ENCODE measurements at regions of chr20 and their contacts with region 1.

Region 1: GRCh38 chr20:47438577-47439381 is 62.9 kb upstream of the NCOA3 start:
- DNase-seq: peak; percentile 87
- ATAC-seq: peak; percentile 70
- H3K4me3 ChIP-seq: peak overlapping the region in 1 of 5 experiments; percentile 11
- H3K4me3 Mint-ChIP-seq: peak overlapping the region; percentile 61
- H3K27ac ChIP-seq: peak overlapping the region; percentile 87 to 88
- H3K27ac Mint-ChIP-seq: peak overlapping the region; percentile 90
- H3K4me1 ChIP-seq: peaks cover 41 to 56% of the 10 kb centered on the region in 2 donors
- H3K4me1 Mint-ChIP-seq: peaks cover 48% of the 10 kb centered on the region
- H3K27me3 ChIP-seq: no peaks in the 10 kb centered on the region
- H3K27me3 Mint-ChIP-seq: no peaks in the 10 kb centered on the region
- CTCF ChIP-seq: no peak

Region 2: GRCh38 chr20:47392015-47392720 is 46.6 kb before region 1 on chr20:
- CTCF ChIA-PET with region 1: no interaction called
- POLR2A ChIA-PET with region 1: no interaction called
- intact Hi-C with region 1: loop called (anchors 5 kb)
- DNase-seq: peak; percentile 54
- ATAC-seq: peak; percentile 71
- H3K4me3 ChIP-seq: no peak overlapping the region
- H3K4me3 Mint-ChIP-seq: peak overlapping the region; percentile 57
- H3K27ac ChIP-seq: peak overlapping the region; percentile 46 to 52
- H3K27ac Mint-ChIP-seq: peak overlapping the region; percentile 83
- H3K4me1 ChIP-seq: peaks cover 28 to 34% of the 10 kb centered on the region in 2 donors
- H3K4me1 Mint-ChIP-seq: peaks cover 37% of the 10 kb centered on the region
- H3K27me3 ChIP-seq: no peaks in the 10 kb centered on the region
- H3K27me3 Mint-ChIP-seq: no peaks in the 10 kb centered on the region
- CTCF ChIP-seq: no peak

Region 3: DNA sequence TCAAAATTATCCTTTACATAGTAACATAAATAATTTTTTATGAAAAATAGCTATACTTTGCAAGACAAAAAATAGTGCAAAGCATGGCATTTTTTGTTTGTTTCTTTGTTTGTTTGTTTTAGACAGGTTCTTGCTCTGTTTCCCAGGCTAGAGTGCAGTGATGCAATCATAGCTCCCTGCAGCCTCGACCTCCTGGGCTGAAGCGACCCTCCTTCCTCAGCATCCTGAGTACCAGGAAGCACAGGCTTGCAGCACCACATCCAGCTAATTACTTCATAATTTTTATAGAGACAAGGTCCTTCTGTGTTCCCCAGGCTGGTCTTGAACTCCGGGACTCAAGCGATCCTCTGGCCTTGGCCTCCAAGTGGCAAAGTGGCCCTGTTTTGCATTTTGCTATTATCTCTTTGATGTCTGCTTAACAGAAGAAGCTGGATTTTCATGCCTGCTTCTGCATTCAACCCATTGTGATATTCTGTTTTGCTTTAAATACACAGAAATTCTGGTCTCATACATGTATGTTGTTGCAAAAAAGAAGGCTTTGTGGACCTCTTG is 32.9 kb before region 1 on chr20:
- CTCF ChIA-PET with region 1: interaction called, 6 read pairs
- POLR2A ChIA-PET with region 1: interaction called, 114 read pairs
- intact Hi-C with region 1: no loop called
- DNase-seq: no peak
- ATAC-seq: no peak
- H3K4me3 ChIP-seq: no peak overlapping the region
- H3K4me3 Mint-ChIP-seq: no peak overlapping the region
- H3K27ac ChIP-seq: no peak overlapping the region
- H3K27ac Mint-ChIP-seq: no peak overlapping the region
- H3K4me1 ChIP-seq: peaks cover 31 to 37% of the 10 kb centered on the region in 2 donors
- H3K4me1 Mint-ChIP-seq: peaks cover 50% of the 10 kb centered on the region
- H3K27me3 ChIP-seq: no peaks in the 10 kb centered on the region
- H3K27me3 Mint-ChIP-seq: no peaks in the 10 kb centered on the region
- CTCF ChIP-seq: no peak

Region 4: DNA sequence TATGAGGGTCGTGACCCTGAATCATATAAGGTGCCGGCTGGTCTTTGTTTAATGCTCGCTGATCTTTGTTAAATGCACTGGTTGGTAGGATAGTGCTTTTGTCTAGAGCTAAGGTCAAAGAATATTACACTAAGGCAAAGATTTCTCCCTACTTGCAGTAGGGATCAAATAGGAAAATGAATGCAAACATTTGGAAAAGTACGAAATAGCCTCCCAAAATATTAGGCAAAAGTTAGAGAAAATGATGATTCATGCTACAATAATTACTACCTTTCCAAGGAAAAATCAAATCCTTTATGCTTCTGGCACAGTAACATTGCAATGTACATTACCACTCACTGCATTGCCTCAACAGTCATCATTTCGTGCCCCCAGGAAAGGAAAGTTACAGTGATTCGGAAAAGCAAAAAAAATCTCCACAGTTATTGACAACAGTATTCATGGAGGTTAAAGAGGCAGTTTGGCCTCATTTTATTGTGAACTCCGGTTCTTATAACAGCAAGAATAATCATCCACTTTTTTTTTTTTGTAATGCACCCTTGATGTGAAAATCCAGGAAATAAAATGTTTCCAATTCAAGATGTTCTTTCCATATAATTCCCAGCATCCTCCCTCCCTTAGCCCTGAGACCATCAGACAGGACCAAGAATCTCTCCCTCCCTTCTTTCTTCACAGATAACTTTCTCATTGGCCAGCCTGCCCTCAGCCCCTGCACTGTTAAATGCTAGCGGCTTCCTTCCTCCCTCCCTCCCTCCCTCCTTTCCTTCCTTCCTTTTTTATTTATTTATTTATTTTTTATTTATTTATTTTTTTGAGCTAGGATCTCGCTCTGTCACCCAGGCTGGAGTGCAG is 20.5 kb before region 1 on chr20:
- CTCF ChIA-PET with region 1: interaction called, 34 read pairs
- POLR2A ChIA-PET with region 1: interaction called, 114 read pairs
- intact Hi-C with region 1: loop called (anchors 1 kb)
- DNase-seq: no peak
- ATAC-seq: no peak
- H3K4me3 ChIP-seq: no peak overlapping the region
- H3K4me3 Mint-ChIP-seq: no peak overlapping the region
- H3K27ac ChIP-seq: peak overlapping the region; percentile 97 to 99
- H3K27ac Mint-ChIP-seq: peak overlapping the region; percentile 99
- H3K4me1 ChIP-seq: peaks cover 59 to 73% of the 10 kb centered on the region in 2 donors
- H3K4me1 Mint-ChIP-seq: peaks cover 67% of the 10 kb centered on the region
- H3K27me3 ChIP-seq: no peaks in the 10 kb centered on the region
- H3K27me3 Mint-ChIP-seq: no peaks in the 10 kb centered on the region
- CTCF ChIP-seq: no peak

Region 5: GRCh38 chr20:47453142-47453782 is 14.5 kb after region 1 on chr20:
- CTCF ChIA-PET with region 1: interaction called, 13 read pairs
- POLR2A ChIA-PET with region 1: interaction called, 11 read pairs
- intact Hi-C with region 1: loop called (anchors 2 kb)
- DNase-seq: peak; percentile 43
- ATAC-seq: peak; percentile 72
- H3K4me3 ChIP-seq: no peak overlapping the region
- H3K4me3 Mint-ChIP-seq: peak overlapping the region; percentile 78
- H3K27ac ChIP-seq: peak overlapping the region in 1 of 2 donors; percentile 9
- H3K27ac Mint-ChIP-seq: peak overlapping the region; percentile 86
- H3K4me1 ChIP-seq: peaks cover 42 to 45% of the 10 kb centered on the region in 2 donors
- H3K4me1 Mint-ChIP-seq: peaks cover 50% of the 10 kb centered on the region
- H3K27me3 ChIP-seq: no peaks in the 10 kb centered on the region
- H3K27me3 Mint-ChIP-seq: no peaks in the 10 kb centered on the region
- CTCF ChIP-seq: no peak

Region 6: GRCh38 chr20:47468290-47469050 is 29.7 kb after region 1 on chr20:
- CTCF ChIA-PET with region 1: interaction called, 6 read pairs
- POLR2A ChIA-PET with region 1: interaction called, 6 read pairs
- intact Hi-C with region 1: loop called (anchors 2 kb)
- DNase-seq: peak; percentile 84
- ATAC-seq: peak; percentile 81
- H3K4me3 ChIP-seq: peak overlapping the region in 2 of 5 experiments; percentile 8 to 38
- H3K4me3 Mint-ChIP-seq: peak overlapping the region; percentile 68
- H3K27ac ChIP-seq: peak overlapping the region; percentile 66 to 79
- H3K27ac Mint-ChIP-seq: peak overlapping the region; percentile 95
- H3K4me1 ChIP-seq: peaks cover 42 to 55% of the 10 kb centered on the region in 2 donors
- H3K4me1 Mint-ChIP-seq: peaks cover 48% of the 10 kb centered on the region
- H3K27me3 ChIP-seq: no peaks in the 10 kb centered on the region
- H3K27me3 Mint-ChIP-seq: no peaks in the 10 kb centered on the region
- CTCF ChIP-seq: no peak